WTC11 (cell line): ENCODE measurements at regions of chr19 and their contacts with region 1.

Region 1: GRCh38 chr19:55407800-55408532 is 378 bp upstream of the UBE2S start:
- DNase-seq: peak; percentile 96
- ATAC-seq: peak; percentile 97
- H3K4me3 Mint-ChIP-seq: peak overlapping the region; percentile 88
- H3K27ac Mint-ChIP-seq: peak overlapping the region; percentile 92
- H3K4me1 Mint-ChIP-seq: peaks cover 31% of the 10 kb centered on the region
- H3K27me3 Mint-ChIP-seq: peaks cover 36% of the 10 kb centered on the region
- CTCF ChIP-seq: no peak

Region 2: GRCh38 chr19:55312621-55313512 is 95.1 kb before region 1 on chr19:
- CTCF ChIA-PET with region 1: no interaction called
- POLR2A ChIA-PET with region 1: no interaction called
- DNase-seq: no peak
- ATAC-seq: no peak; the same call in 1 of the 2 replicates
- H3K4me3 Mint-ChIP-seq: no peak overlapping the region
- H3K27ac Mint-ChIP-seq: peak overlapping the region; percentile 81
- H3K4me1 Mint-ChIP-seq: no peaks in the 10 kb centered on the region
- H3K27me3 Mint-ChIP-seq: peaks cover 5% of the 10 kb centered on the region; the same call in 1 of the 2 replicates
- CTCF ChIP-seq: no peak

Region 3: DNA sequence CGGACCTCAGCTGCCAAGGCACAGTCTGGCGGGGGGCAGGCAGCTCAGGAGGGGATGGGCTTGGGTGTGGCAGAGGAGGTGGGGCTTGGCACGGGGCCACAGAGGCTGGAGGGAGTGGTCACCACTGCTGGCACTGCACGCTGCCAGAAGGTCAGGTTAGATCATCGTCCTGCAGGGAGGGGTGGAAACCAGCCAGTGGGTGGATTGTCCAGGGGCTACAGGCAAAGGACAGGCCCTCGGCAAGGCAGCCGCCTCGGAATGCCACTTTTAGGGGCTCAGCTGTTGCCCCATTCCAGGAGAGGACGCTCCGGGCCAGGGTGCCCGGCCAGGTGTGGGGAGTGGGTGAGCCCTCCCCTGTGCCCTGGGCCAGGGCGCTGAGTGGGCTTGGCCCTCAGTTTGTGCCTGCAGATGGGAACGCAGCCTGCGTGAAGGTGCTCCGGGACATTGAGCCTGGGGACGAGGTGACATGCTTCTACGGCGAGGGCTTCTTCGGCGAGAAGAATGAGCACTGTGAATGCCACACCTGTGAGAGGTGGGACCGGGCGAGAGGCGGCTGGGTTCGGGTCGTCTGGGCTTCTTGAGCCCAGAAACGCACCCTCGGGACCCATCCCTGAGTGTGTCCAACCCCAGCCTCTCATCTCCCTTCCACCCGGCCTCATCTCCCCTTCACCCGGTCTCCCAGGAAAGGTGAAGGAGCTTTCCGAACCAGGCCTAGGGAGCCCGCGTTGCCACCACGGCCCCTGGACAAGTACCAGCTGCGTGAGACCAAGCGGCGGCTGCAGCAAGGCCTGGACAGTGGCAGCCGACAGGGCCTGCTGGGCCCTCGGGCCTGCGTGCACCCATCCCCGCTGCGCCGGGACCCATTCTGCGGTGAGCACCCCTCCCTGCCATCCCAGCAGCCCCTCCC is 61.9 kb before region 1 on chr19:
- CTCF ChIA-PET with region 1: no interaction called
- POLR2A ChIA-PET with region 1: no interaction called
- DNase-seq: no peak
- ATAC-seq: no peak
- H3K4me3 Mint-ChIP-seq: no peak overlapping the region
- H3K27ac Mint-ChIP-seq: peak overlapping the region; percentile 24; the same call in 1 of the 2 replicates
- H3K4me1 Mint-ChIP-seq: peaks cover 47% of the 10 kb centered on the region
- H3K27me3 Mint-ChIP-seq: peaks cover 8% of the 10 kb centered on the region
- CTCF ChIP-seq: no peak

Region 4: DNA sequence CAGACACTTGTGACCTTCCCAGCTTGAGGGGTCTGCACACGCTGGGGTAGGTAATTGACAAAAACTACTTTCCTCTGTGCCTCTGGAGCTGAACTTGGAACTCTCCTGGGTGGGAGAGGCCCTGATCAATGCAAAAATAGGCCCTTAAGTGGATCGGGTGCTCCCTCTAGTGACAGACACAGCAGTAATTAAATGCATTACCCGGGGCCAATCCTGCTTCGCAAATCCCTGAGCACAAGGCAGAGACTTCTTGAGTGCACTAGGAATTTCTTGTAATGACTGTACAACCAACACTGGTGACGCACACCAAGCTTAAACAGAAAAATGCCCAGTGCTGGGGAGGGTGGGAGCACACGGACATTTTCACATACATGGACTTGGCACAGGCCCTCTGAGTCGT is 10.2 kb after region 1 on chr19:
- CTCF ChIA-PET with region 1: interaction called, 11 read pairs
- POLR2A ChIA-PET with region 1: interaction called, 3 read pairs
- DNase-seq: peak; percentile 71
- ATAC-seq: peak; percentile 97
- H3K4me3 Mint-ChIP-seq: no peak overlapping the region
- H3K27ac Mint-ChIP-seq: no peak overlapping the region; the same call in 1 of the 2 replicates
- H3K4me1 Mint-ChIP-seq: peaks cover 2% of the 10 kb centered on the region
- H3K27me3 Mint-ChIP-seq: peaks cover 78% of the 10 kb centered on the region
- CTCF ChIP-seq: peak; percentile 40